ENCODE measurements at regions of chrX and their contacts with region 1.

Region 1: DNA sequence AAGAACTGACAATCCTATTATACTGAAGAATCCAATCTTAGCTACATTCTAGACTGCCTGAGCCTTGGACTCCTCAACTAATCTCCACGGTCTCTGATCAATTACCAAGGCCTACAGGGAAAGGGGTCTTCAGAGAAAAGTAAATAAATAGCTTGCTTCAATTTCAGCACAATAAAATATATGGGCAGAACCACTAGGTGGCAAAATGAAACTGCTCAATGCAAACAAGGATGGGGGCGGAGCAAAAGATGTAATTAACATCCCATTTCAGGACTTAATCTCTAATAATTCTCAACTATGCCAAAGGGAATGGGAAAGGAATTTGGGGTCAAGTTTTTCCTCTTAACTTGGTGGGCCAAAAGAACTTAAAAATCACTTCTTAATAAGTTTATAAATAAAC is 78.4 kb upstream of the MAP3K15 start:
- DNase-seq: peak; percentile 64
- H3K4me3 Mint-ChIP-seq: no peak overlapping the region
- H3K27ac Mint-ChIP-seq: no peak overlapping the region
- H3K4me1 Mint-ChIP-seq: no peaks in the 10 kb centered on the region
- H3K27me3 Mint-ChIP-seq: peaks cover 31% of the 10 kb centered on the region
- CTCF ChIP-seq: peak; percentile 57

Region 2: GRCh38 chrX:19513383-19513782 is 80.3 kb before region 1 on chrX:
- CTCF ChIA-PET with region 1: no interaction called
- POLR2A ChIA-PET with region 1: no interaction called
- intact Hi-C with region 1: no loop called
- DNase-seq: no peak
- H3K4me3 Mint-ChIP-seq: no peak overlapping the region
- H3K27ac Mint-ChIP-seq: no peak overlapping the region
- H3K4me1 Mint-ChIP-seq: no peaks in the 10 kb centered on the region
- H3K27me3 Mint-ChIP-seq: peaks cover 44% of the 10 kb centered on the region
- CTCF ChIP-seq: no peak

Region 3: DNA sequence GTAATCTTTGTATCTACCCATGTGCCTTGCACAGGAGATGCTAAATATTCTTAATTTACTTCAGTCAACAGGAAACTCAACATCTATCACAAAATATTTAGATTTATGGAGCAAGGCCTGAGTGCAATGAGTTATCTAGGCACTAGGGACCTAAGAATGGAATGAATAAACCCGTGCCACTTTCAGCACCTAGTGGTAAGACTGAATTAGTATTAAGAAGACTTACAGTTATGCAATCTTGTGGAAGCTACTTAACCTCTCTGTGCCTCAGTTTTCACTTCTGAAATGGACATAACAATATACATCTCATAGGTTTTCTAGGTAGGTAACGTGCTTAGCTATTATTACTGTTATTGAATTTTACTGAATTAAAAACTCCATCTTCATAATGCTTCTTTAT is 66.2 kb after region 1 on chrX:
- CTCF ChIA-PET with region 1: interaction called, 3 read pairs
- POLR2A ChIA-PET with region 1: no interaction called
- intact Hi-C with region 1: loop called (anchors 10 kb)
- DNase-seq: peak; percentile 43
- H3K4me3 Mint-ChIP-seq: no peak overlapping the region
- H3K27ac Mint-ChIP-seq: no peak overlapping the region
- H3K4me1 Mint-ChIP-seq: peaks cover 5% of the 10 kb centered on the region
- H3K27me3 Mint-ChIP-seq: peaks cover 48% of the 10 kb centered on the region
- CTCF ChIP-seq: peak; percentile 9

Region 4: DNA sequence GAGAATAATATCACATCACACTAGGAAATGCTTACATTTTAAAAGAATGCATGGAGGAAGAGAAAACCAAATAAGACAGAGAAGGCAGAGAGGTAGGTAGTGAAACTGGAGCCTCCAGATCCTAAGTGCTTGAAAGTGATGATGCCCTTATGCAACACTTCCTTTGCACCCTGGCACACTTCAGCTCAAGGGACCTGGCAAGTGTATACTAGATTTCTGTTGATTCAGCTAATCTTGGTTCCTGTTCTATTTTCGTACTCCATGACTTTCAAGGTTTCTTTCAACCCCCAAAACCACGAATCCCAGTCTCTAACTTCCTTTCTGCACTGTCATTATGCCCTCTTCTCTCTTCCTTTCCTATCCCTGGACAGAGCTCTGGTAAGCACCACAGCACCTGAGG is 330.6 kb after region 1 on chrX:
- CTCF ChIA-PET with region 1: no interaction called
- POLR2A ChIA-PET with region 1: no interaction called
- intact Hi-C with region 1: no loop called
- DNase-seq: no peak
- H3K4me3 Mint-ChIP-seq: no peak overlapping the region
- H3K27ac Mint-ChIP-seq: no peak overlapping the region
- H3K4me1 Mint-ChIP-seq: no peaks in the 10 kb centered on the region
- H3K27me3 Mint-ChIP-seq: peaks cover 26% of the 10 kb centered on the region
- CTCF ChIP-seq: no peak

Region 5: DNA sequence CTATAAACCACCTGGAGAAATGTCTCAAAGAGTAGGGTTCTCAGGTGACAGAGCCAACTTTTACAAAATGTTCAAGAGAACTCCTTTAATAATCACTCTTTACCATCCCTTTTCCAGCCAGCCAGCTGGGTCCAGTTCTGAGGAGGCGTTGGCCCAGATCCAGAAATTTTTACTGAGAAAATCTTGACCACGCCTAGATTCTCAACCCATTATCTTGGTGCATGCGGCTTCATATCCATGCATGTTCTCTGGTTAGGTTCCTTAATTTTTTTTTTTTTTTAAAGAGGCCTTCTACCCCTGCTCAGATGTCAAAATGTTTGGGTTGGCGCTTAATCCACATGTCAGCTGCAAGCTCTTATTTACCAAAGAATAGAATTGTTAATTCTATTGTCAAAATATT is 535.0 kb after region 1 on chrX:
- CTCF ChIA-PET with region 1: no interaction called
- POLR2A ChIA-PET with region 1: interaction called, 3 read pairs
- intact Hi-C with region 1: loop called (anchors 10 kb)
- DNase-seq: peak; percentile 39
- H3K4me3 Mint-ChIP-seq: no peak overlapping the region
- H3K27ac Mint-ChIP-seq: no peak overlapping the region
- H3K4me1 Mint-ChIP-seq: peaks cover 14% of the 10 kb centered on the region
- H3K27me3 Mint-ChIP-seq: no peaks in the 10 kb centered on the region
- CTCF ChIP-seq: no peak